Colonic mucosa (tissue), 4 donors: ENCODE measurements at regions of chr11 and their contacts with region 1.

Region 1: DNA sequence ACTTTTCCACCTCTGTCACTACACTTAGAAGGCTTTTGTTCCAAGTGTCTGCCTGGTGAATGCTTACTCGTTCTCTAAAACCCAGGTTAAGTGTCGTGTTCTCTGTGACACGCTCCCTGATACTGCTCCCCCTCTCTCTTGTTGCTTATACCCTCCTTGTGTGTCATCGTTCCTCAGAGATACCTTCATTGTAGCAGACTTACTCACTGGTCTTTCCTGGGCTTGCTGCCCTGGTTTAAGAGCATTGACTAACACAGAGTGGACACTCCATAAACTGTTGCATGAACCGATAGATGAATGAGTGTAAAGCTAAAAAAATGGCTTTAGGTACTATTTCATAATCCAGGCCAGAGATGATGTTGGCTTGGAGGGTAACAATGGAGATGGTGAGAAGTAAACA is 171.3 kb downstream of the GRIK4 start:
- DNase-seq: no peak
- H3K4me3 ChIP-seq: no peak overlapping the region
- H3K27ac ChIP-seq: no peak overlapping the region
- H3K4me1 ChIP-seq: no peaks in the 10 kb centered on the region
- H3K27me3 ChIP-seq: no peaks in the 10 kb centered on the region
- CTCF ChIP-seq: no peak

Region 2: GRCh38 chr11:120335908-120336640 is 346.8 kb before region 1 on chr11 and contains the start of gene ARHGEF12:
- intact Hi-C with region 1: loop called (anchors 10 kb)
- DNase-seq: peak; percentile 96
- H3K4me3 ChIP-seq: peak within 1 kb of the TSS; percentile 96
- H3K27ac ChIP-seq: peak within 1 kb of the TSS; percentile 96
- H3K4me1 ChIP-seq: peaks cover 8% of the 10 kb centered on the region
- H3K27me3 ChIP-seq: no peaks in the 10 kb centered on the region
- CTCF ChIP-seq: no peak
- total RNA-seq, gene ARHGEF12: 66.7 to 103 TPM

Region 3: DNA sequence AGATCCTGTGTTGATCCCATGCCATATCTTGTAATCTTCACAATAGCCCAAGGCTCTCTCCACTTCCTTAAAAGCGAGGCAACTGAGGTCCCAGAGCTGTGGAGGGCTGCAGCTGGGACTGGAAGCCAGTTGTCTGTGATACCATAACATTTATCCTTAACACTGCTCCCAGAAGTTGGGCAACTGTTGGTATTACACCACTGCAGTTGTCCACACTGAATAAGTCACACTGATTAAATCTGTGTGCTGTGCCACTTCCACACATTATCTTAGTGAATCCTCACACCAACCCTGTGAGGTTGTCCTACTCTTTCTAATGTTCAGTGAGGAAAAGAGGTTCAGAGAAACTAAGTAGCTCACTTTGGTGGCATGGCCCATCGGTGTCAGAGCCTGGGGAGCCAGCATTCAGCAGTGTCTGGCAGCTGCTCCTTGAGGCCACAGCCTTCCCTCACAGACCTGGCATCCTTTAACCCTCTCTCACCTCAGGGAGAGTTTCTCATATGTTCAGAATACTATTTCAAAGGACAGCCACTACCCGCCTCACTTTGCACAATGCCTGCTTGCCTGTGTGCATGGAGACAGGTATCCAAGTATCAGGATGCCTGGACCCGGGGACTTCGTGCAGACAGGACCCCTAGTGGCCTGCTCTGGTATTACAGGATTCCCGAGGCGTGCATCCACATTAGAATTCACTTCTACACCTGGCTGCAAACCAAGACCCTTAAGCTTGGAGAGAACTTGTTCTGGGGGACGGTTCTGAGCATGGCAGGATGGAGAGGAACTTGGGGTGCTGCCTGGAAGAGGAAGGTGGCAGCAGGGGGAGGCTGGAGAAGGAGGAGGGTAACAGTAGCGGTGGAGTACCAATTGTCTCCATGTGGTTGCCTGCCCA is 119.2 kb after region 1 on chr11:
- intact Hi-C with region 1: loop called (anchors 10 kb)
- DNase-seq: peak; percentile 65
- H3K4me3 ChIP-seq: no peak overlapping the region
- H3K27ac ChIP-seq: no peak overlapping the region
- H3K4me1 ChIP-seq: no peaks in the 10 kb centered on the region
- H3K27me3 ChIP-seq: no peaks in the 10 kb centered on the region
- CTCF ChIP-seq: peak; percentile 92

Region 4: GRCh38 chr11:120893440-120894201 is 210.8 kb after region 1 on chr11:
- intact Hi-C with region 1: no loop called
- DNase-seq: no peak
- H3K4me3 ChIP-seq: no peak overlapping the region
- H3K27ac ChIP-seq: no peak overlapping the region
- H3K4me1 ChIP-seq: no peaks in the 10 kb centered on the region
- H3K27me3 ChIP-seq: no peaks in the 10 kb centered on the region
- CTCF ChIP-seq: no peak

Region 5: DNA sequence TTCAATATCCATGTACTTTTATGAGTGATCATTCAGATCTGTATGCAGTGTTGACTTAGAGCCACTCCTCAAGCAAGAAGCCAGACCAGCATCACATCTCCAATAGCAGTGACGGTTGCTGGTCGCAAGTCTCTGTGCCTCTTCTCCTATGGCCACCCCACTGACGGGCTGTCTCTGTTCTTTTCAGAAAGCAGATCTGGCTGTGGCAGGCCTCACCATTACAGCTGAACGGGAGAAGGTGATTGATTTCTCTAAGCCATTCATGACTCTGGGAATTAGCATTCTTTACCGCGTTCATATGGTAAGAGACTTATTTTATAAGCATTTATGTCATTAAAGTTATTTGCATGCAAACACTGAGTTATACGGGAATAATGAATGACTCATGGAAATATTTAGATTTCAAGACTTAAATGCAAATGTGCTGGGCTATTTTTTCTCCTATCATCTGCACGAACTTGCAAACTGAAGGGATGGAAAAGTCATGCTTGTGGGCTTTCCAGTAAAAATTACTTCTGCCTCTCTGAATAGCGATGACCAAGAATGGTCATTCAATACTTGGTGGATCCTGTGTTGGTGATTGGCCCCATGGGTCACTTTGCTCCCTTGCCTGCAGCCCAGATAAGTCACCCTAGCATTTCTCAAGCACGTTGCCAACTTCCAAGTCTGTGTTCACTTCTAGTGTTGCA is 257.4 kb after region 1 on chr11:
- intact Hi-C with region 1: no loop called
- DNase-seq: no peak
- H3K4me3 ChIP-seq: no peak overlapping the region
- H3K27ac ChIP-seq: no peak overlapping the region
- H3K4me1 ChIP-seq: no peaks in the 10 kb centered on the region
- H3K27me3 ChIP-seq: no peaks in the 10 kb centered on the region
- CTCF ChIP-seq: no peak